CD14-positive monocyte (primary cell): ENCODE measurements at regions of chr12 and their contacts with region 1.

Region 1: GRCh38 chr12:121005346-121005815 is 10.9 kb downstream of the C12orf43 start:
- DNase-seq: peak; percentile 25 to 56 (median 40)
- H3K4me3 ChIP-seq: no peak overlapping the region
- H3K4me3 Mint-ChIP-seq: no peak overlapping the region
- H3K27ac ChIP-seq: no peak overlapping the region
- H3K27ac Mint-ChIP-seq: peak overlapping the region in 5 of 7 donors; percentile 26 to 71 (median 43)
- H3K4me1 ChIP-seq: no peaks in the 10 kb centered on the region
- H3K4me1 Mint-ChIP-seq: no peaks in the 10 kb centered on the region
- H3K27me3 ChIP-seq: no peaks in the 10 kb centered on the region
- H3K27me3 Mint-ChIP-seq: peaks cover 0 to 4% (median 2%) of the 10 kb centered on the region in 3 donors
- CTCF ChIP-seq: peak; percentile 81

Region 2: DNA sequence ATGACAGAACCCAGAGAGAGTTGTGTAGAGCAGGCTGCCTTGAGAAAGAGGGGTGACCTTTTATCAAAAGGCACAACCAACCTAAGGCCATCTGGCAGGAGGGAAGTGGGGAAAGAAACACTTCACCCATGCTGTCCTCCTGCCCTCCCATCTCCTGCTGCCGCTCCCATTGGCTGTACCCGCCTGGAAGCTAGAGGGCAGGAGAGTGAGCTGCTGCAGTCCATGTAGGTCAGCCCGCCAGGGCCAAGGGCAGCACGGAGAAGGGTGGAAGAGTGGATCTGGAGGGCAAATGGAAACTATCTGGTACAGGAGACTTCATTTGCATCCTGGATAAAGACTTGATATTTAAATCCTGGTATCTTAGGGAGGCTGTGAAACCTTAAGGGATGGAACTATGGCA is 376.5 kb before region 1 on chr12:
- intact Hi-C with region 1: no loop called
- DNase-seq: no peak
- H3K4me3 ChIP-seq: no peak overlapping the region
- H3K4me3 Mint-ChIP-seq: no peak overlapping the region
- H3K27ac ChIP-seq: no peak overlapping the region
- H3K27ac Mint-ChIP-seq: peak overlapping the region in 1 of 7 donors; percentile 72
- H3K4me1 ChIP-seq: no peaks in the 10 kb centered on the region
- H3K4me1 Mint-ChIP-seq: peaks cover 9% of the 10 kb centered on the region
- H3K27me3 ChIP-seq: no peaks in the 10 kb centered on the region
- H3K27me3 Mint-ChIP-seq: peaks cover 0 to 10% (median 3%) of the 10 kb centered on the region in 3 donors
- CTCF ChIP-seq: no peak

Region 3: GRCh38 chr12:120886199-120887018 is 119.0 kb before region 1 on chr12:
- intact Hi-C with region 1: no loop called
- DNase-seq: no peak
- H3K4me3 ChIP-seq: no peak overlapping the region
- H3K4me3 Mint-ChIP-seq: peak overlapping the region; percentile 2 to 15
- H3K27ac ChIP-seq: peak overlapping the region in 1 of 2 donors; percentile 68
- H3K27ac Mint-ChIP-seq: peak overlapping the region in 6 of 7 donors; percentile 4 to 52 (median 48)
- H3K4me1 ChIP-seq: peaks cover 23 to 39% of the 10 kb centered on the region in 2 donors
- H3K4me1 Mint-ChIP-seq: peaks cover 53% of the 10 kb centered on the region
- H3K27me3 ChIP-seq: no peaks in the 10 kb centered on the region
- H3K27me3 Mint-ChIP-seq: peaks cover 0 to 1% (median 0%) of the 10 kb centered on the region in 3 donors
- CTCF ChIP-seq: no peak

Region 4: GRCh38 chr12:121048442-121048841 is 43.1 kb after region 1 on chr12:
- intact Hi-C with region 1: loop called in 1 of 2 experiments (anchors 5 kb)
- DNase-seq: no peak
- H3K4me3 ChIP-seq: no peak overlapping the region
- H3K4me3 Mint-ChIP-seq: no peak overlapping the region
- H3K27ac ChIP-seq: no peak overlapping the region
- H3K27ac Mint-ChIP-seq: peak overlapping the region in 2 of 7 donors; percentile 27 to 37
- H3K4me1 ChIP-seq: no peaks in the 10 kb centered on the region
- H3K4me1 Mint-ChIP-seq: peaks cover 8% of the 10 kb centered on the region
- H3K27me3 ChIP-seq: no peaks in the 10 kb centered on the region
- H3K27me3 Mint-ChIP-seq: peaks cover 6 to 15% (median 13%) of the 10 kb centered on the region in 3 donors
- CTCF ChIP-seq: no peak

Region 5: GRCh38 chr12:121238604-121239350 is 233.4 kb after region 1 on chr12:
- intact Hi-C with region 1: loop called in 1 of 2 experiments (anchors 10 kb)
- DNase-seq: no peak
- H3K4me3 ChIP-seq: peak overlapping the region in 1 of 3 experiments; percentile 32
- H3K4me3 Mint-ChIP-seq: peak overlapping the region in 1 of 2 donors; percentile 54
- H3K27ac ChIP-seq: peak overlapping the region; percentile 67 to 81
- H3K27ac Mint-ChIP-seq: peak overlapping the region; percentile 80 to 94 (median 89)
- H3K4me1 ChIP-seq: peaks cover 41% of the 10 kb centered on the region in 2 donors
- H3K4me1 Mint-ChIP-seq: peaks cover 48% of the 10 kb centered on the region
- H3K27me3 ChIP-seq: no peaks in the 10 kb centered on the region
- H3K27me3 Mint-ChIP-seq: peaks cover 0 to 2% (median 0%) of the 10 kb centered on the region in 3 donors
- CTCF ChIP-seq: no peak